ENCODE measurements at regions of chr6 and their contacts with region 1.

Region 1: DNA sequence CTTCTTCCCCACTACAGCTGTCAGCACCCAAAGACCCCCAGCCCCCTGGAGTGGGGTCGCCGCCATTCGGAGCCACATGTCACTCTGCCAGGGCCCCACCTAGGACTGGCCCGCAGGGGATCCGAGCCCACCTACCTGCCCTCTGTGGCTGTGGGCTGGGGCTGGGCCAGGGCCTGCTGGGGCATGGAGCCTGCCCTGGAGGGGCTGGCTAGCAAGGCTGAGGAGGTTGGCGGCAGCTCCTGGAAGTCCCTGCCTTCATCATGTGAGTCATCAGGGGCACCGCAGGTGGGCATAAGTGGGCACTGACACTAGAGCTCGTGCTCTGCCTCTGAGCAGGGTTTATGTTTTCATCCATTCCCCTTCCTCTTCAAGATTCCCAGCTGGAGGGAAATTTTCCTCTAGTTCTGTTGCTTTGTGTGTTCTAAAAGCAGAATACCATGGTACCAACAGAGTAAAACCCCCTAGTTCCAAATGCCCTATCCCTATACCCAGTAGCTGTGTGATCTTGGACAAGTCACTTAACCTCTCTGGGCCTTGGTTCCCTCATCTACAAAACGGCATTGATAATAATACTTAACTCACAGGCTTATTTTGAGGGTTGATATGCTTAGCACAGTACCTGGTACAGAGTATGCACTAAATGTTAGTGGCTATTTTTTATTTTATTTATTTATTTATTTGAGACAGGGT is 8.7 kb upstream of the FANCE start:
- DNase-seq: no peak
- H3K4me3 ChIP-seq: no peak overlapping the region
- H3K27ac ChIP-seq: no peak overlapping the region
- H3K4me1 ChIP-seq: no peaks in the 10 kb centered on the region
- H3K27me3 ChIP-seq: no peaks in the 10 kb centered on the region
- CTCF ChIP-seq: no peak

Region 2: DNA sequence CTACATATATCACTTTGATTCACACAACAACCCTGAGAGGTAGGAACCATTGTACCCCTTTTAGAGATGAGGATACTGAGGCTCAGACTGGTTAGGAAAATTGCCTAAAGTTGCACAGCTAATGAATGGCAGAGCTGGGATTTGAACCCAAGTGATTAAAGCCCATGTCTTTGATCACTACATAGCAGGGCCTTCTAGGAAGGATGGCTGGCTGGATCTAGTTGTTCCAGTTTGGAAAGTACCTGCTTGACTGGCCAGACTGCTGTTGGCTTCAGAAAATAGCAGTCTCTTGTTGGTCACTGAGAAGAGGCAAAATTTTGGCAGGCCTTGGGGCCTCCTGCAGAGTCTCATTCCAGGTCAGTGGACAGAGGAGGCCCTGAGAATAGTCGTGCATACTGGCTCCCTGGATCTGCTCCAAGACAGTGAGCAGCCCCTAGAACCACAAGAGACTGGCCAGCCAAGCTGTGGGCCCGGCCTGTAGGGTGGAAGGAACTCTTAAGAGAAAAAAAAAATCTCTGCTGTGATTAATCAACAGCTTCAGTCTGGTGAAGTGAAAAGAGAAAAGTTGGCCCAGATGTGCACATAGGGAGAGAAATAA is 83.6 kb before region 1 on chr6:
- intact Hi-C with region 1: loop called (anchors 5 kb)
- DNase-seq: peak in 1 of 2 donors; percentile 70
- H3K4me3 ChIP-seq: no peak overlapping the region
- H3K27ac ChIP-seq: peak overlapping the region in 1 of 2 donors; percentile 61
- H3K4me1 ChIP-seq: peaks cover 0 to 45% (median 36%) of the 10 kb centered on the region in 4 donors
- H3K27me3 ChIP-seq: no peaks in the 10 kb centered on the region
- CTCF ChIP-seq: no peak

Measured in tibial artery (tissue), 4 donors.